ENCODE measurements at regions of chr3 and their contacts with region 1.

Region 1: GRCh38 chr3:138270245-138270644 is 59.4 kb downstream of the NME9 start:
- DNase-seq: no peak
- H3K4me3 ChIP-seq: no peak overlapping the region
- H3K27ac ChIP-seq: no peak overlapping the region
- H3K4me1 ChIP-seq: no peaks in the 10 kb centered on the region
- H3K27me3 ChIP-seq: no peaks in the 10 kb centered on the region
- CTCF ChIP-seq: 0 out of 2 replicates have a peak, but pooled peaks have one; percentile 14

Region 2: DNA sequence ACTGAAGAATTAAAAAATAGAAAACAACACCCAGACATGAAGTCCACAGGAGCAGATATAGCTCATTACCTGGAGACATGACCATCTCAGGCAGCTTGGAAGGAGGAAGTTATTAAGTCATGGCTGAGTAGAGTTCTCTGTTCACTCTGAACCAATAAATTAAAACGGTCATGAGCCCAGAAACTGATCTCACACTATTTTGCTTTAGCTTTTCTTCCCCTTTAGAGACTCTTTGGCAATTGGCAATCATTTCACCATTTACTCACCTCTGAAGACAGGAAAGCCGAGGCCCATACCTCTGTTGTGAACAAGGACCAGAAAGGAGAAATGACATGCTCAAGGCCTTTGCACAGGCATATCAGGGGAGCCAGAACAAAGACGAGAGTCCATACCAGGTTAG is 233.7 kb before region 1 on chr3:
- CTCF ChIA-PET with region 1: no interaction called
- POLR2A ChIA-PET with region 1: interaction called, 31 read pairs
- intact Hi-C with region 1: no loop called
- DNase-seq: no peak
- H3K4me3 ChIP-seq: no peak overlapping the region
- H3K27ac ChIP-seq: no peak overlapping the region
- H3K4me1 ChIP-seq: no peaks in the 10 kb centered on the region
- H3K27me3 ChIP-seq: no peaks in the 10 kb centered on the region
- CTCF ChIP-seq: no peak